ENCODE measurements at regions of chr1 and their contacts with region 1.

Region 1: GRCh38 chr1:93061895-93062792 is 16.9 kb upstream of the MTF2 start:
- DNase-seq: peak; percentile 62
- H3K4me3 Mint-ChIP-seq: no peak overlapping the region
- H3K27ac Mint-ChIP-seq: no peak overlapping the region
- H3K4me1 Mint-ChIP-seq: no peaks in the 10 kb centered on the region
- H3K27me3 Mint-ChIP-seq: peaks cover 65% of the 10 kb centered on the region
- CTCF ChIP-seq: peak; percentile 29

Region 2: GRCh38 chr1:92968138-92969032 is 93.8 kb before region 1 on chr1:
- CTCF ChIA-PET with region 1: interaction called, 8 read pairs
- POLR2A ChIA-PET with region 1: no interaction called
- intact Hi-C with region 1: loop called (anchors 1 kb)
- DNase-seq: peak; percentile 45
- H3K4me3 Mint-ChIP-seq: no peak overlapping the region
- H3K27ac Mint-ChIP-seq: no peak overlapping the region
- H3K4me1 Mint-ChIP-seq: no peaks in the 10 kb centered on the region
- H3K27me3 Mint-ChIP-seq: no peaks in the 10 kb centered on the region
- CTCF ChIP-seq: peak; percentile 52

Region 3: GRCh38 chr1:93015590-93015989 is 46.6 kb before region 1 on chr1:
- CTCF ChIA-PET with region 1: interaction called, 20 read pairs
- POLR2A ChIA-PET with region 1: no interaction called
- intact Hi-C with region 1: no loop called
- DNase-seq: peak; percentile 53
- H3K4me3 Mint-ChIP-seq: no peak overlapping the region
- H3K27ac Mint-ChIP-seq: no peak overlapping the region
- H3K4me1 Mint-ChIP-seq: peaks cover 13% of the 10 kb centered on the region
- H3K27me3 Mint-ChIP-seq: peaks cover 37% of the 10 kb centered on the region
- CTCF ChIP-seq: no peak

Region 4: DNA sequence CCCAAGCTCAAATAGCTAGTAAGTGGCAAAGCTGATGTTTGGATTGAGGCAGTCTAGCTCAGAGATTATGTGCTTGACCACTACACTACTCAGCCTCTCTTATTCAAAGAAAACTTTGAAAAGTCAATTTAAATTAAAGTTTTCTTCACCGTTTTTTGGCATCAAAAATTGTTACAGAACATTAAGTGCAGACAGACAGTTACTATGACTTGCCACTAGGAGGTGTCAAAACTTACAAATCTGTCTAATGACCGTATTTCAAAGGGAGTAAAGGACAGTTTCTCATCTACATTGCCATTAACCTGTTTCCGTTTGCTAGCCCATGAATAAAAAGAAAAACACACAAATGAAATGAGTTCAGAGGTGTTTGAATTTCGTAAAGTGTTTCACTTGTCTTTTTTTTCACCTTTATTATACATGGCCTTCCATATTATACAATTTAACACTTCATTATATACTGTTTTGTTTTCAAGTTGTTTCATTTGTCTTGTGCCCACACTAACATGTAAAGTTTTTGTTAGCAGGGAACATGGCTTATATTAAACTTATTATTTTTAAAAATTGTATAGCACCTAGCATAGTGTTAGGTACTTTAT is 40.5 kb before region 1 on chr1:
- CTCF ChIA-PET with region 1: interaction called, 28 read pairs
- POLR2A ChIA-PET with region 1: interaction called, 3 read pairs
- intact Hi-C with region 1: loop called (anchors 1 kb)
- DNase-seq: peak; percentile 60
- H3K4me3 Mint-ChIP-seq: no peak overlapping the region
- H3K27ac Mint-ChIP-seq: no peak overlapping the region
- H3K4me1 Mint-ChIP-seq: peaks cover under 1% of the 10 kb centered on the region
- H3K27me3 Mint-ChIP-seq: peaks cover 69% of the 10 kb centered on the region
- CTCF ChIP-seq: peak; percentile 45

Region 5: DNA sequence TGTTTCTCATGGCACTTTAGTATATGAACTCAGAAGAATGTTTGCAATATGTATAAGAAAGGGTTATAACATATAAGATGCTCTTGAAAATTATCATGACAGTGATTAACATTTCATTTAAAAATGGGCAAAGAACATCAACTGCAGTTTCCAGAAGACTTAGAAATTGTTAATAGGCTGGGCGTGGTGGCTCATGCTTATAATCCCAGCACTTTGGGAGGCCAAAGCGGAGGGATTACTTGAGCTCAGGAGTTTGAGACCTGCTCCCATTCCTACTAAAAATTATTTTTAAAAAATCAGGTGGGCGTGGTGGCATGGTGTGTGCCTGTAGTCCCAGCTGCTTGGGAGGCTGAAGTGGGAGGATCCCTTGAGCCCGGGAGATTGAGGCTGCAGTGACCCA is 40.0 kb after region 1 on chr1:
- CTCF ChIA-PET with region 1: no interaction called
- POLR2A ChIA-PET with region 1: no interaction called
- intact Hi-C with region 1: no loop called
- DNase-seq: no peak
- H3K4me3 Mint-ChIP-seq: no peak overlapping the region
- H3K27ac Mint-ChIP-seq: no peak overlapping the region
- H3K4me1 Mint-ChIP-seq: peaks cover 7% of the 10 kb centered on the region
- H3K27me3 Mint-ChIP-seq: no peaks in the 10 kb centered on the region
- CTCF ChIP-seq: no peak

Region 6: GRCh38 chr1:93123201-93123783 is 61.1 kb after region 1 on chr1:
- CTCF ChIA-PET with region 1: no interaction called
- POLR2A ChIA-PET with region 1: no interaction called
- intact Hi-C with region 1: no loop called
- DNase-seq: no peak
- H3K4me3 Mint-ChIP-seq: no peak overlapping the region
- H3K27ac Mint-ChIP-seq: no peak overlapping the region
- H3K4me1 Mint-ChIP-seq: no peaks in the 10 kb centered on the region
- H3K27me3 Mint-ChIP-seq: no peaks in the 10 kb centered on the region
- CTCF ChIP-seq: no peak

Region 7: DNA sequence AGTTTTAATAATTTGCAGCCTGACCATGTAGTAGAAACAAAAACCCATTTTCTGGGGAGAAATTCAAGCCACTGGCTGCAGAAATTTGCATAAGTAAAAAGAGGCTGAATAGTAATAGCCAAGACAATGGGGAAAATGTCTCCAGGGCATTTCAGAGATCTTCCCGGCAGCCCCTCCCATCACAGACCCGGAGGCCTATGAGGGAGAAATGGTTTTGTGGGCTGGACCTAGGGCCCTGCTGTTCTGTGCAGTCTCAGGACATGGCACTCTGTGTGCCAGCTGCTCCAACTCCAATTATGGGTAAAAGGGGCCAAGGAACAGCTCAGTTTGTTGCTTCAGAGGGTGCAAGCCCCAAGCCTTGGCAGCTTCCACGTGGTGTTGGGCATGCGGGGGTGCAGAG is 346.1 kb after region 1 on chr1:
- CTCF ChIA-PET with region 1: no interaction called
- POLR2A ChIA-PET with region 1: no interaction called
- intact Hi-C with region 1: no loop called
- DNase-seq: no peak
- H3K4me3 Mint-ChIP-seq: no peak overlapping the region
- H3K27ac Mint-ChIP-seq: no peak overlapping the region
- H3K4me1 Mint-ChIP-seq: no peaks in the 10 kb centered on the region
- H3K27me3 Mint-ChIP-seq: peaks cover 18% of the 10 kb centered on the region
- CTCF ChIP-seq: no peak

Measured in MCF 10A (cell line).